CD8-positive, alpha-beta memory T cell (primary cell): ENCODE measurements at regions of chr17 and their contacts with region 1.

Region 1: DNA sequence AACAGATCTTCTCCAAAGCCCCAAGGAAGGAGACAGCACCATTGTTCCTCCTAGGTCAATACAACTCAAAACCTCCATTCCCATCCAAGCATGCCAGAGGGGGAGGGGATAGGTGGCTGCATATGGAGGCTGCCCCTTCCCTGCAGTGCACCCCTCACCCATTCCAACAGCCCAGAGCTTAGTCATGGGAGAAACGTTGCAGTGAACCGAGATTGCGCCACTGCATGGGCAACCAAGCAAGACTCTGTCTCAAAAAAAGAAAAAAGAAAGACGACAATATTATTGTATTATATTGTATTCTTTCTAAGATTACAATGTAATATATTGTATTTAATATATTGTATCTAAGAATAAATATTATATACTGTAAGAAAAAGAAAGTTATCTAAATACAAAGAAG is 36.4 kb upstream of the CD300E start:
- DNase-seq: no peak
- H3K4me3 ChIP-seq: no peak overlapping the region
- H3K4me3 Mint-ChIP-seq: no peak overlapping the region
- H3K27ac ChIP-seq: no peak overlapping the region
- H3K27ac Mint-ChIP-seq: no peak overlapping the region
- H3K4me1 ChIP-seq: no peaks in the 10 kb centered on the region
- H3K4me1 Mint-ChIP-seq: peaks cover 3 to 7% (median 5%) of the 10 kb centered on the region in 3 donors
- H3K27me3 ChIP-seq: peaks cover 5% of the 10 kb centered on the region
- H3K27me3 Mint-ChIP-seq: peaks cover 32 to 55% of the 10 kb centered on the region in 2 donors

Region 2: DNA sequence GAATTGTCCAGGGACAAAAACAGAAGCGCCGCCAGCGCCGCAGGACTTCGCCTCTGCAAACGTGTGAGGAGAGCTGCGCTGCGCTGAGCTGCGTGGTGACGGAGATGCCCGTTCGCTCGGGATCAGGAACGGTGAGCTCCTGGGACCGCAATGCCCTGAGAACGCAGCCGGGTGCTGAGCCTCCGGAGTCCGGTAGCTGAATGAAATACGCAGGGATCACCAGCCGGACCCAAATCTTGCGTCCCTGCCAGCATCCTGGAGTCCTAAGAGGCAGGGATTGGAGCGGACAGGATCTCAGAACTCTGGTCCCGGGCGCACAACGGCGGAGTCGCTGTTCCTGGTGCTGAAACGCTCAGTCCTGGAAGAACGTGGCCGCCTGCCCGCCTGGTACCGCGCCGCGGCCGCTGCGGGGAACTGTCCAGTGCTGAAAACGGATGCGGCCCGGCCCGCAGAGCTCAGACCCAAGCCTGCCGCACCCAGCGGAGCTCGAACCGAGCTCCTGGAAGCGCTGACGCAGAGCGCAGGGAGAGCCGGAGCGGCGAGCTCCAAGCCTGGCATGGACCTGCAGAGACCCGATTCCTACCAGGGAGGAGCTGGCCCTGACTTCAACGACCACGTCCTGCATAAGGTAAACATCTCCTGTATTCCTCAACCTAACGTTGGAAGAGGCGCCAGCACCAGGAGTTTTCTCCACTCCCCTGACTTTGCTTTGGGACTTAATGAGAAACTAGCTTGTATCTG is 11.3 kb after region 1 on chr17:
- CTCF ChIA-PET with region 1: interaction called, 32 read pairs
- POLR2A ChIA-PET with region 1: no interaction called
- DNase-seq: peak; percentile 49 to 76 (median 60)
- H3K4me3 ChIP-seq: no peak overlapping the region
- H3K4me3 Mint-ChIP-seq: no peak overlapping the region
- H3K27ac ChIP-seq: no peak overlapping the region
- H3K27ac Mint-ChIP-seq: no peak overlapping the region
- H3K4me1 ChIP-seq: no peaks in the 10 kb centered on the region
- H3K4me1 Mint-ChIP-seq: peaks cover 0 to 4% (median 2%) of the 10 kb centered on the region in 3 donors
- H3K27me3 ChIP-seq: peaks cover 18% of the 10 kb centered on the region
- H3K27me3 Mint-ChIP-seq: peaks cover 51 to 77% of the 10 kb centered on the region in 2 donors

Region 3: GRCh38 chr17:74723891-74724290 is 64.0 kb after region 1 on chr17:
- CTCF ChIA-PET with region 1: interaction called, 20 read pairs
- POLR2A ChIA-PET with region 1: no interaction called
- DNase-seq: no peak
- H3K4me3 ChIP-seq: no peak overlapping the region
- H3K4me3 Mint-ChIP-seq: no peak overlapping the region
- H3K27ac ChIP-seq: no peak overlapping the region
- H3K27ac Mint-ChIP-seq: no peak overlapping the region
- H3K4me1 ChIP-seq: no peaks in the 10 kb centered on the region
- H3K4me1 Mint-ChIP-seq: no peaks in the 10 kb centered on the region
- H3K27me3 ChIP-seq: no peaks in the 10 kb centered on the region
- H3K27me3 Mint-ChIP-seq: peaks cover 0 to 7% of the 10 kb centered on the region in 2 donors

Region 4: DNA sequence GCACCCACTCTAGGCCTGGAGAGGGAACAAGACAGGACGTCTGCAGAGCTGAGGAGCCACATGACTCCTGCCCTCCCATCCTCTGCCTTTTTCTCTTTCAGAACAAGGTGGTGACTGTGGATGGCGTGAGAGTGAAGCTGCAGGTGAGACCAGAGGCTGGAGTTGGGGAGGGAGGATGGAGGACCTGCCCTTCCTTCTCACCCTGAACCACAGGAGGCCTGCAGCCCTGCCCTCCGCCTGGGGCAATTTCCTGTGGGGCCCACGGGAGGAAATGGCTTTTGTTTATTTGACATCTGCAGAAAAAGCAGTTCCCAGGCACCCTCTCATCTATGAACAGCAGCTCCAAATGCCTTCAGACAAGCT is 82.2 kb after region 1 on chr17:
- CTCF ChIA-PET with region 1: interaction called, 199 read pairs
- POLR2A ChIA-PET with region 1: interaction called, 31 read pairs
- DNase-seq: peak; percentile 33 to 70 (median 48)
- H3K4me3 ChIP-seq: peak overlapping the region; percentile 31
- H3K4me3 Mint-ChIP-seq: peak overlapping the region; percentile 71 to 93 (median 82)
- H3K27ac ChIP-seq: no peak overlapping the region
- H3K27ac Mint-ChIP-seq: peak overlapping the region; percentile 73 to 96 (median 92)
- H3K4me1 ChIP-seq: peaks cover 95% of the 10 kb centered on the region
- H3K4me1 Mint-ChIP-seq: peaks cover 84 to 90% (median 84%) of the 10 kb centered on the region in 3 donors
- H3K27me3 ChIP-seq: no peaks in the 10 kb centered on the region
- H3K27me3 Mint-ChIP-seq: no peaks in the 10 kb centered on the region

Region 5: DNA sequence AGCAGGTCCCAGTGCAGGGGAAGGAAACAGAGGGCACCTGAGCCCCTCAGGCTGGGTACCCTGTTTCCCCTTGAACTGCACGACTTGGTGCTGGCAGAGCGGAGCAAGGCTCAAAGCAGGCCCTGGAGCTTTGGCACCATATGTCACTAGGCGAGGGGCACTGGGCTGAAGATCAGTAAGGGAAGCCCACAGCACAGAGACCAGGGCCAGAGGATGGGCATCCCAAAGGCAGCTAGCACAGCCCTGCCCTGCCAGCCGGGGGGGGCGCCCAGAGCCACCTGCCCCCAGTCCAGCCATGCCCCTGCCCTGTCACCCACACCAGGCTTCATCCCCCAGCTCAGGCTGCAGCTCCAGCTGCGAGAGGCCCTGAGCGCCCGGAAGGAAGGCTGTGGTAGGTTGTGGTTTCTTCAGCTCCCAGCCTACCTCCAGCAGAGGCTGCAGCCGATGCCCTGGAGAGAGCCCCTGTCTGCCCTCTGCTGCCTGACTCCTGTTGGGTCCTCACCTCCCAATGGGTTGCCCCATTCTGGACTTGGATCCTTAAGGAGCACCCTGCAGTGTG is 99.4 kb after region 1 on chr17:
- CTCF ChIA-PET with region 1: interaction called, 62 read pairs
- POLR2A ChIA-PET with region 1: no interaction called
- DNase-seq: peak; percentile 46 to 77 (median 59)
- H3K4me3 ChIP-seq: peak overlapping the region; percentile 57
- H3K4me3 Mint-ChIP-seq: peak overlapping the region; percentile 55 to 90 (median 85)
- H3K27ac ChIP-seq: no peak overlapping the region
- H3K27ac Mint-ChIP-seq: peak overlapping the region; percentile 81 to 96 (median 90)
- H3K4me1 ChIP-seq: peaks cover 91% of the 10 kb centered on the region
- H3K4me1 Mint-ChIP-seq: peaks cover 73 to 87% (median 73%) of the 10 kb centered on the region in 3 donors
- H3K27me3 ChIP-seq: no peaks in the 10 kb centered on the region
- H3K27me3 Mint-ChIP-seq: no peaks in the 10 kb centered on the region

Region 6: DNA sequence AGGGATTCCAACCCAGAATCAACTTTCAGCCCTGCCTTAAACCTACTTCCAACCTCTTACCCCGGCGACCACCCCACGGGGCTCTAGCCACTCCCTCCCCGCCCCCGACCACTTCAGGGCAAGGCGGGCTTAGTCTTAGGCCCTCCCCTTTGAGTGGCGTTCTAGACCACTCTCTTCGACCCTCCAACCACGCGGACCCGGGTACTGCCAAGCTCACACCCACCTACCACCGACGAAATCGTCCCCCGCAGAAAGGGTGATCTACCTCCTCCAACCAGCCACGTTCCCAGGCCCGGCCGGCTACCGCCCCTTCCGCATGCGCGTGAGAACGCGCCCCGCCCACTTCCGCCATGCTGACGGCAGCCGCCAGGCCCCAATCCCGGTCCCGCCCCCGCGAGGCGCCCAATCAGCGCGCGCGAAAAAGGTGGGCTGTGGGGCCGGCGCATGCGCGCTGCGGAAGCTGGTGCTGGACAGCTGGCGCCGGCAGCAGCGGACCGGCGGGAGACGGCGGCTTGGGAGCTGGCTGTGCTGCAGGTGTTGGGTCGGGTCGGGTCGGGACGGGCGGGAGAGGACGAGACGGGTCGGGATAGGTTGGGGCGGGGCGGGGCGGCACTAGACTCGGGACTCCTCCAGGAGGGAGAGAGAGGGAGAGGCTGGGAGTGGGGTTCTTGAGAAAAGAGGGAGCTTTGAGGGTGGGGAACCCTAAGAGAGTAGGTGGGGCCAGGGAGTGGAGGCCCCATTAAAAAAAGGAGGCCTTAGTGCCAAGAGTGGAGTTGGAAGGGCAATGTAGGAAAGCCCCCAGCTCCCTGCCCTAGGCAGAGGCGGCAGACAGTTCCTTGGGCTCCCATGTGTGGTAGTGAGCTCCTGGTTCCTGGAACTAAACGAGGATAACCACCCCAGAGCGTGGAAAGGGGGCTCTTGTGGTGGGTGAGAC is 116.4 kb after region 1 on chr17 and contains the start of gene NAT9:
- CTCF ChIA-PET with region 1: interaction called, 52 read pairs
- POLR2A ChIA-PET with region 1: interaction called, 7 read pairs
- DNase-seq: peak; percentile 97 to 99 (median 99)
- H3K4me3 ChIP-seq: peak within 1 kb of the TSS; percentile 91
- H3K4me3 Mint-ChIP-seq: peak within 1 kb of the TSS; percentile 97 to 99 (median 98)
- H3K27ac ChIP-seq: peak within 1 kb of the TSS; percentile 73
- H3K27ac Mint-ChIP-seq: peak within 1 kb of the TSS; percentile 93 to 98 (median 98)
- H3K4me1 ChIP-seq: peaks cover 59% of the 10 kb centered on the region
- H3K4me1 Mint-ChIP-seq: peaks cover 60 to 83% (median 80%) of the 10 kb centered on the region in 3 donors
- H3K27me3 ChIP-seq: no peaks in the 10 kb centered on the region
- H3K27me3 Mint-ChIP-seq: no peaks in the 10 kb centered on the region
- total RNA-seq, gene NAT9: 42.7 to 44.5 TPM

Region 7: DNA sequence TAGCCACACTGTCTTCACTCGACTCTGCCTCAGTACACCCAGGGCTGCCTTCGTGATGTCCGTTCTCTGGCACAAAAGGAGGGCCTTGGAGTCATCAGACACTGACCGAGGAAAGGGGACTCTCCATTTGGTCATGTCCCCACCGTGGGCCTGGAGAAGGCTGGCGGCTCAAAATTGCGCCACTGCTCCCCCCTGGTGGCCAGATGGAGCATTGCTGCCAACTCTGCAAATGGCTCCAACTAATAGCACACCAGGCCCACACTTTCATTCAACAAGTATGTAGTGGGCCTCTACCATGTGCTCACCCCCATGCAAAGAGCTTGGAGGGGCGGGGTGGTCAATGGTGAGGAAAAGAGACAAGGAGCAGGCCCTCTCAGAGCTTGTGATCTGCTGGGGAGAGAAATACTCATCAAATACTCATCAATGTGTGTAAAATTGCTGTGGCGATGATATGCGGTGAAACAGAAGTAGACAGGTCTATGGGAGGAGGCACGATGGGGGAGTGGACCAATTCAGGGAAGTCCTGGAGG is 205.0 kb after region 1 on chr17:
- CTCF ChIA-PET with region 1: interaction called, 31 read pairs
- POLR2A ChIA-PET with region 1: no interaction called
- DNase-seq: peak; percentile 50 to 75 (median 63)
- H3K4me3 ChIP-seq: no peak overlapping the region
- H3K4me3 Mint-ChIP-seq: no peak overlapping the region
- H3K27ac ChIP-seq: no peak overlapping the region
- H3K27ac Mint-ChIP-seq: peak overlapping the region in 3 of 8 donors; percentile 42 to 67 (median 44)
- H3K4me1 ChIP-seq: peaks cover 17% of the 10 kb centered on the region
- H3K4me1 Mint-ChIP-seq: peaks cover 10 to 22% (median 12%) of the 10 kb centered on the region in 3 donors
- H3K27me3 ChIP-seq: peaks cover 14% of the 10 kb centered on the region
- H3K27me3 Mint-ChIP-seq: peaks cover 10 to 14% of the 10 kb centered on the region in 2 donors